ENCODE measurements at regions of chr7 and their contacts with region 1.

Region 1: DNA sequence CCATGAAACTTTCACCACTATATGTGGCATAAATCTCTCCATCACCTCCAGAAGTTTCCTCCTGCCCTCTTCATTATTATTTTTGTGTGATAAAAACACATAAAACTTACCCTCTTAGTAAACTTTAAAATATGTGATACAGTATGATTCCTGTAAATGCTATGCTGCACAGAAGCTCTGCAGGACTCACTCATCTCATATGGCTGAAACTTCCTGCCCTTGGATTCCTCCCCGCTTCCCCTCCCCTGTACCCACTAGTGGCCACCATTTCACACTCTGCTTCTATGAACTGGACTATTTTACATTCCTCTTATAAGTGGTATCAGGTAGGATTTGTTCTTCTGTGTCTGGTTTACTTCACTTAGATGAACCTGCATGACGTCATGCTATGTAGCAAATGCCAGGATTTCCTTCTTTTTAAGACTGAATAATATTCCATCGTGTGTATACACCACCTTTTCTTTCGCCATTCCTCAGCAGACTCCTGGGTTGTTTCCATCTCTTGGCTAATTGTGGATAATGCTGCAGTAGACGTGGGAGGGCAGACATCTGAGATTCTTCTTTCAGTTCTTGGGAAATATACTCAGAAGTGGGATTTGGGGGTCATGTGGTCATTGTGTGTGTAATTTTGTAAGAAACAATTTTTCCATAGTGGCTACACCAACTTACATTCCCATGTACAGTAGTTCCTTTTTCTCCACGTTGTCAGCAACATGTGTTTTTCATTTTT is 335.2 kb downstream of the SDK1 start:
- DNase-seq: no peak
- ATAC-seq: no peak
- H3K4me3 ChIP-seq: no peak overlapping the region
- H3K27ac ChIP-seq: no peak overlapping the region
- H3K4me1 ChIP-seq: no peaks in the 10 kb centered on the region
- H3K27me3 ChIP-seq: no peaks in the 10 kb centered on the region
- CTCF ChIP-seq: no peak

Region 2: DNA sequence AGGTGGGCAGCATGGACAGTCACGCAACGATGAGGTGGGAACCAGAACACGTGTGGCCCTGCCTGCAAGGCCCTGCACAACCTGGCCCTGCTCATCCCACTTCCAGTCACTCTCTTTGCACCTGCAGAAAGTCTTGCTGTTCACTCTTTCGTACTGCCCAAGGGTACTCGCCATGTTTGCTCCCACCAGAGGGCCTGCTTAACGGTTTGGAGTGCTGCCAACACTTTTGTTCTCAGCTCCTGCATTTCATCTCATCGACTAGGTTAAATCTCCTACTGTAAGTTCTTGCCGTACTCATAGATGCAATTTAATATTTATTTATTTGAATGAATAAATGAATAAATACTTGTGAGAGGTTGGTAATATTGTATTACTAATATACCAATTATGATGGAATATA is 20.0 kb before region 1 on chr7:
- CTCF ChIA-PET with region 1: no interaction called
- POLR2A ChIA-PET with region 1: interaction called, 18 read pairs
- in situ Hi-C with region 1: no loop called
- intact Hi-C with region 1: no loop called
- DNase-seq: no peak
- ATAC-seq: no peak
- H3K4me3 ChIP-seq: no peak overlapping the region
- H3K27ac ChIP-seq: no peak overlapping the region
- H3K4me1 ChIP-seq: peaks cover 13% of the 10 kb centered on the region
- H3K27me3 ChIP-seq: no peaks in the 10 kb centered on the region
- CTCF ChIP-seq: no peak

Region 3: DNA sequence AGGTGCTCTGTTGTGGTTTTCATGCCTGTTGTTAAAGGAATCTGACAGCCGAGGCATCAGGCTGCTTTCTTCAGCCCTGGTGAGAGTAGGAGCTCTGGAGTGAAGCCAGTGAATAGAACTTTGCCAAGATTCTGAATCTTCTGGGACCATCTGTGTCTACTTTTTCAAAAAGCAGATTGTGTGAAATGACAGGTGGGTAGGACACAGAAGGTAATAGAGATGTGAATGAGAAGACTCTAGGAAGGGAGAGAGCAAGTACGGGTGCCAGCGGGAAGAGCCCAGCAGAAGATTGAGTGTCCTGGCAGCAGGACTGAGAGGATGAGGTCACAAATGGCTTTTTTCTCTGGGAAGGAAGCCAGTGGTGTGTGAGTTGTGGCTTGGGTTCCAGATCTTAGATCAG is 94.0 kb after region 1 on chr7:
- CTCF ChIA-PET with region 1: no interaction called
- POLR2A ChIA-PET with region 1: no interaction called
- in situ Hi-C with region 1: no loop called
- intact Hi-C with region 1: no loop called
- DNase-seq: no peak
- ATAC-seq: no peak
- H3K4me3 ChIP-seq: no peak overlapping the region
- H3K27ac ChIP-seq: peak overlapping the region; percentile 10; the same call in 1 of the 2 replicates
- H3K4me1 ChIP-seq: no peaks in the 10 kb centered on the region
- H3K27me3 ChIP-seq: no peaks in the 10 kb centered on the region
- CTCF ChIP-seq: no peak